SK-N-SH (cell line): ENCODE measurements at regions of chr18 and their contacts with region 1.

Region 1: GRCh38 chr18:74551936-74552555 is 17.7 kb downstream of the CNDP1 start:
- DNase-seq: peak; percentile 84
- H3K4me3 ChIP-seq: no peak overlapping the region; a peak in 1 of 4 replicates
- H3K27ac ChIP-seq: no peak overlapping the region
- H3K4me1 ChIP-seq: no peaks in the 10 kb centered on the region
- H3K27me3 ChIP-seq: peaks cover 23% of the 10 kb centered on the region; the same call in 1 of the 2 replicates
- CTCF ChIP-seq: peak; percentile 82
- EP300 ChIP-seq: no peak
- RAD21 ChIP-seq: peak; percentile 89

Region 2: GRCh38 chr18:74291771-74292540 is 260.1 kb before region 1 on chr18 and contains the start of gene CYB5A:
- CTCF ChIA-PET with region 1: no interaction called
- POLR2A ChIA-PET with region 1: no interaction called
- DNase-seq: peak; percentile 100
- H3K4me3 ChIP-seq: peak within 1 kb of the TSS; percentile 67 to 96
- H3K27ac ChIP-seq: peak within 1 kb of the TSS in 1 of 2 experiments; percentile 82; a peak in 2 of 4 replicates
- H3K4me1 ChIP-seq: peaks cover 0 to 17% of the 10 kb centered on the region in 2 experiments; a peak in 1 of 4 replicates
- H3K27me3 ChIP-seq: no peaks in the 10 kb centered on the region
- CTCF ChIP-seq: no peak; the same call in 1 of the 2 replicates
- EP300 ChIP-seq: no peak
- RAD21 ChIP-seq: no peak
- polyA plus RNA-seq, gene CYB5A: 39.0 and 42.1 TPM in 2 replicates

Region 3: GRCh38 chr18:74353169-74353775 is 198.8 kb before region 1 on chr18:
- CTCF ChIA-PET with region 1: interaction called, 88 read pairs
- POLR2A ChIA-PET with region 1: no interaction called
- DNase-seq: peak; percentile 35
- H3K4me3 ChIP-seq: no peak overlapping the region
- H3K27ac ChIP-seq: no peak overlapping the region
- H3K4me1 ChIP-seq: no peaks in the 10 kb centered on the region
- H3K27me3 ChIP-seq: peaks cover 11% of the 10 kb centered on the region
- CTCF ChIP-seq: peak; percentile 62
- EP300 ChIP-seq: no peak
- RAD21 ChIP-seq: peak; percentile 75

Region 4: GRCh38 chr18:74518456-74519295 is 33.4 kb before region 1 on chr18:
- CTCF ChIA-PET with region 1: interaction called, 11 read pairs
- POLR2A ChIA-PET with region 1: no interaction called
- DNase-seq: no peak
- H3K4me3 ChIP-seq: no peak overlapping the region
- H3K27ac ChIP-seq: no peak overlapping the region
- H3K4me1 ChIP-seq: no peaks in the 10 kb centered on the region
- H3K27me3 ChIP-seq: no peaks in the 10 kb centered on the region
- CTCF ChIP-seq: no peak
- EP300 ChIP-seq: no peak
- RAD21 ChIP-seq: no peak

Region 5: DNA sequence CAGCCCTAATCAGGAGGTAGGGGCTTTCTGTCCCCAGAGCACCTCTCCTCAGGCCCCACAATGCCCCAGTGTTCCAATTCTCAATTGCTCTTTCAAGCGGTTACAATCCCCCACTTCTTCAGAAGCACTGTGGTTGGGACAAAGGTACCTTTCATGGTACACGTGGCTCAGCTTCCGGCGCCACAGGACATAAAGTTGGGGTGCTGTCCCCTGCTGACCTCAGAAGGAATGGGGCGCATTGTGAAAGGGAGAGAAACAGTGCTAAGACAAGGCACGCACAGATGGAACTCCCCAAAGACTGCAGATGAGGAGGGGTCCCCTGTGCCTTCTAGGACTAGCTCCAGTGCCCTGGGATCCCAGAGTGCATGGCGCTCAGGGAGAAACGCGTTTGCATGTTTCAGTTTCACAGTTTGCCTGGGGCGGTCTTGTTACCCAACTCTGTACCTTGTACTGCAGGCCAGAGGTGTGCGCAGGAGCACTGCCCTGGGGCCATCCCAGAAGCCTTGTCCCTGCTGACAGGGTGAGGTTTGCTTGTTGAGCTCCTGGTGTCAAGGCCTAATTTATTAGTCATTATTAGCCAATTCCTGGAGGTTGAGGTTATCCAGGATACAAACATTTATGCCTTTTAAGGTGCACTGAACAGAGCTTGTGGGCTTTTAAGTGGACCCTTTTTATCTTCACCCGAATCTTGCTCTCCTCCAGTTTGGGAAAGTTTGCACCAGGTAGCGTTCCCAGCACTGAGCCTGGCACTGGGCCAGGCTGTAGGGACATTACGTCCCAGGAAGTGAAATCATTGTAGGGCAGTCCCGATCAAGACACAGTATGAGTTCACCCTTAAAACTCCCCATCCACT is 10.1 kb before region 1 on chr18:
- CTCF ChIA-PET with region 1: interaction called, 16 read pairs
- POLR2A ChIA-PET with region 1: no interaction called
- DNase-seq: no peak
- H3K4me3 ChIP-seq: no peak overlapping the region
- H3K27ac ChIP-seq: no peak overlapping the region
- H3K4me1 ChIP-seq: no peaks in the 10 kb centered on the region
- H3K27me3 ChIP-seq: peaks cover 32% of the 10 kb centered on the region; the same call in 1 of the 2 replicates
- CTCF ChIP-seq: no peak
- EP300 ChIP-seq: no peak
- RAD21 ChIP-seq: no peak

Region 6: GRCh38 chr18:74577019-74577418 is 25.0 kb after region 1 on chr18:
- CTCF ChIA-PET with region 1: interaction called, 11 read pairs
- POLR2A ChIA-PET with region 1: no interaction called
- DNase-seq: peak; percentile 57
- H3K4me3 ChIP-seq: no peak overlapping the region
- H3K27ac ChIP-seq: no peak overlapping the region
- H3K4me1 ChIP-seq: peaks cover 0 to 2% of the 10 kb centered on the region in 2 experiments; a peak in 1 of 4 replicates
- H3K27me3 ChIP-seq: no peaks in the 10 kb centered on the region; the same call in 1 of the 2 replicates
- CTCF ChIP-seq: no peak
- EP300 ChIP-seq: peak in 1 of 2 experiments; percentile 39; a peak in 1 of 4 replicates
- RAD21 ChIP-seq: no peak

Region 7: GRCh38 chr18:74689251-74689650 is 137.2 kb after region 1 on chr18:
- CTCF ChIA-PET with region 1: no interaction called
- POLR2A ChIA-PET with region 1: no interaction called
- DNase-seq: no peak
- H3K4me3 ChIP-seq: no peak overlapping the region
- H3K27ac ChIP-seq: peak overlapping the region in 1 of 2 experiments; percentile 45; a peak in 2 of 4 replicates
- H3K4me1 ChIP-seq: no peaks in the 10 kb centered on the region; a peak in 2 of 4 replicates
- H3K27me3 ChIP-seq: no peaks in the 10 kb centered on the region
- CTCF ChIP-seq: no peak
- EP300 ChIP-seq: peak in 1 of 2 experiments; percentile 29; a peak in 1 of 4 replicates
- RAD21 ChIP-seq: no peak